Heart left ventricle (tissue), 16 donors: ENCODE measurements at regions of chr19 and their contacts with region 1.

Region 1: GRCh38 chr19:33302175-33302973 is at the start of gene CEBPA:
- DNase-seq: peak; percentile 74 to 92 (median 80)
- ATAC-seq: peak; percentile 52 to 94 (median 90)
- H3K4me3 ChIP-seq: peak within 1 kb of the TSS; percentile 49 to 93 (median 72)
- H3K27ac ChIP-seq: peak within 1 kb of the TSS in 9 of 12 donors; percentile 1 to 88 (median 57)
- H3K4me1 ChIP-seq: peaks cover 0 to 43% (median 15%) of the 10 kb centered on the region in 12 donors
- H3K27me3 ChIP-seq: peaks cover 0 to 44% (median 18%) of the 10 kb centered on the region in 9 donors
- CTCF ChIP-seq: peak in 8 of 12 donors; percentile 12 to 66 (median 54)
- POLR2A ChIP-seq: peak in 1 of 2 donors; percentile 91
- total RNA-seq, gene CEBPA: 0.69 to 40.1 (median 2.5) TPM

Region 2: DNA sequence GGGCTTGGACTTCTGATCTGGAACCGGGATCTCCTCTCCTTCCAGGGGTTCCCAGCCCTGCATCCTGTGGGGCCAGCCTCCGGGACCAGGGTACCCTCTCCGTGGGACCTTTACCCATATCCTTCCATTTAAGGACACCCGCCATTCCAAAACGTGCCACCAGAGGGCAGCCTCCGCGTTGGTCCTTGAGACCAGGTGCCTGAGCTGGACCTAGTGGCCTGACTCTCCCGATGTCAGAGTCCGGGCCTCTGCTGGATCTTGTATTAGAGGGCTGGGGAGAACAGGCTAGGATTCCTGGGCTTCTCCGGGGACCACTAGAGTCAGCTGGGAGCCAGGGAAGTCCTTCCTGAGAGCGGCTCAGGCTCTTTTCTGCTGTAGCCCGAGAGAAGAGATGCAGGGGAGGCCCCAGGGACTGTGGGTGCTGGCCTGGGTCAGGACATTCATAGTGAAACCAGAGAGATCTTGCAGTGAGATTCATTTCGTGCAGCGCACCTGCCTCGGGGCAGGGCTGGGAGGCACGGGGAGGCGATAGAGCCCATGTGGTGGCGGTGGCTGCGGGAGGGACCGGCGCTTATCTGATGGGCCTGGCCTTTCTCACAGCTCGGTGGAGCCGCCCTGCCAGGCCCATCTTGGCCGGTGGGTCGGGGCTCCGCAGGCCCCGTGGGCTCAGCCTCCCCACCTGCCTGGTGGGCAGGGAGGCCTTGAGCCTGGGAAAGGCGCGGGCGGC is 66.9 kb before region 1 on chr19:
- intact Hi-C with region 1: loop called in 1 of 10 experiments (anchors 5 kb)
- DNase-seq: peak; percentile 61 to 91 (median 77)
- ATAC-seq: peak in 3 of 4 donors; percentile 67 to 82 (median 71)
- H3K4me3 ChIP-seq: no peak overlapping the region
- H3K27ac ChIP-seq: no peak overlapping the region
- H3K4me1 ChIP-seq: peaks cover 0 to 3% (median 0%) of the 10 kb centered on the region in 12 donors
- H3K27me3 ChIP-seq: peaks cover 0 to 33% (median 6%) of the 10 kb centered on the region in 9 donors
- CTCF ChIP-seq: peak; percentile 82 to 94 (median 90)
- POLR2A ChIP-seq: no peak

Region 3: DNA sequence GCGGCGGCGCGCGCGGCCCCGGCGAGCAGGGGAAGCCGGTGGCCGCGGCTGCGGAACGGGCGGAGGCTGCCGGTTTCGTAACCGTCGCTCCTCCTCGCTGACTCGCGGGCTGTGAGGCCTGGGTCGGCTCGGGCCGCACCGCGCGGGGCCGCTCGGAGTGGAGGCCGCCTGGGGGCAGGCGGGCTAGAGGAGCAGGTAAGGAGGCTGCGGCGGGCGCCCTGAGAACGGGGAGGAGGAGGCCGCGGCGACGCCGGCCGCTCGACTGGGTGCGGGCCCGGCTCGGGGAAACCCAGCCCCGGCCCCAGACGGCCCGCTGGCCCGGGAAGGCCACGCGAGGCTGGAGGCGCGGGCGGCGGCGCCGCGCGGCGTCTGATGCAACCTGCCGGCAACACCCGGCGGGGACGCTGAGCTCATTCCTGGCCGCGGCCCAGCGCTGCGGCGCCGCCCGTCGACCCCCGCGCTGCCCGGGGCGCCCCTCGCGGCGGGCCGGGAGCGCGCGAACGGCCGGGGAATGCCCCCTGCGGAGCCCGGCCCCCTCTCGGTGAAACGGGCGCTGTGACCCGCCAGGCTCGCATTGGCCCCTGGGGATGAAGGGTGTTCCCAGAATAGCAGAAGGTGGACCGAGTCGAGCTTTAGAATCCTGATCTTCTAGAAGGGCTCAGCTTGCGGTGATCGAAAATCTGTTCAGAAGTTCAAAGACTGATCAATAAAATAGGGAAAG is 71.5 kb after region 1 on chr19 and contains the start of gene CEBPG:
- intact Hi-C with region 1: loop called in 4 of 10 experiments (anchors 5 to 10 kb)
- DNase-seq: peak; percentile 62 to 82 (median 63)
- ATAC-seq: peak in 3 of 4 donors; percentile 40 to 48 (median 44)
- H3K4me3 ChIP-seq: peak within 1 kb of the TSS; percentile 67 to 99 (median 87)
- H3K27ac ChIP-seq: peak within 1 kb of the TSS; percentile 91 to 100 (median 98)
- H3K4me1 ChIP-seq: peaks cover 4 to 59% (median 28%) of the 10 kb centered on the region in 12 donors
- H3K27me3 ChIP-seq: no peaks in the 10 kb centered on the region
- CTCF ChIP-seq: peak in 6 of 12 donors; percentile 18 to 47 (median 37)
- POLR2A ChIP-seq: peak; percentile 61 to 94
- total RNA-seq, gene CEBPG: 11.8 to 18.3 (median 14.7) TPM

Region 4: DNA sequence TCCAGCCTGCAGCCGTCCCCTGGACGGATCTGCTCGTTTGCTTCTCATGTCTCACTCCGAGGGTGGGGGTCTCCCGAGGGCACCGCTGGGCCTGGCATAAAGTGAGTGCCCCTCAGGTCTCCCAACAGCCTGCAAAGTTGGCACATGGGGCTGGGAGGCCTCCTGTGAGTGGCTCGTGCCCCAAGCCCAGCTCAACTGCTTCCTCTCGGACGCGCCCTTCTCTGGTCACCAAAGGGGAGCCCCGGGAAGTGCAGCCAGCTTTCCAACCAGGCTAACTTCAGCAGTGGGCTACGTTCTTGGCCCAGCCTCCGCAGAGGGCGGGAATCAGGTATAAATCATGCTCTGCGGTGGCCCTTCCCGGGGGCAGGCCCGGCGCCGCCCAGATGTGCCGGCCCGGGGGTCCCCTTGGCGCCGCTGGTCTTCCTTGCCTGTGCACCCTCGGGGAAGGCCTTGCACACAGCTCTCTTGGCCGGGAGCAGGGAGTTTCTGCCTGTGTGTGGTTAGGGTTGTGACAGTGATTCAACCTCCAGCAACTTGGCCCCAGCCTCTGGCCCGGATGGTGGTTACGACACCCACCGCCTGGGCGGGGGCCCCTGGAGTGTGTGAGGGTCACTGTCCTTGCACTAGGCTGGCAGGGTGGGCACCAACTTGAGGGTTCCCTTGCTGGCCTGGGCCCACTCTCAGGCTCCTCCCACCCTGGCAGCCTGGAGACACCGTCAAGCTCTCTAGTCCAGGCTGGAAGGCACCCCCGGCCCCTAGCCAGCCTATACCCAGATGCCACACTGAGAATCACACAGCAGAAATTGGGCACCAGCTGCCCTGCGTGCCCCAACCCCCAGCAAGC is 91.9 kb after region 1 on chr19:
- intact Hi-C with region 1: loop called in 1 of 10 experiments (anchors 10 kb)
- DNase-seq: peak in 3 of 5 donors; percentile 57 to 73 (median 70)
- ATAC-seq: peak in 2 of 4 donors; percentile 41
- H3K4me3 ChIP-seq: no peak overlapping the region
- H3K27ac ChIP-seq: peak overlapping the region in 8 of 12 donors; percentile 1 to 44 (median 15)
- H3K4me1 ChIP-seq: peaks cover 4 to 87% (median 69%) of the 10 kb centered on the region in 12 donors
- H3K27me3 ChIP-seq: no peaks in the 10 kb centered on the region
- CTCF ChIP-seq: no peak
- POLR2A ChIP-seq: no peak

Region 5: DNA sequence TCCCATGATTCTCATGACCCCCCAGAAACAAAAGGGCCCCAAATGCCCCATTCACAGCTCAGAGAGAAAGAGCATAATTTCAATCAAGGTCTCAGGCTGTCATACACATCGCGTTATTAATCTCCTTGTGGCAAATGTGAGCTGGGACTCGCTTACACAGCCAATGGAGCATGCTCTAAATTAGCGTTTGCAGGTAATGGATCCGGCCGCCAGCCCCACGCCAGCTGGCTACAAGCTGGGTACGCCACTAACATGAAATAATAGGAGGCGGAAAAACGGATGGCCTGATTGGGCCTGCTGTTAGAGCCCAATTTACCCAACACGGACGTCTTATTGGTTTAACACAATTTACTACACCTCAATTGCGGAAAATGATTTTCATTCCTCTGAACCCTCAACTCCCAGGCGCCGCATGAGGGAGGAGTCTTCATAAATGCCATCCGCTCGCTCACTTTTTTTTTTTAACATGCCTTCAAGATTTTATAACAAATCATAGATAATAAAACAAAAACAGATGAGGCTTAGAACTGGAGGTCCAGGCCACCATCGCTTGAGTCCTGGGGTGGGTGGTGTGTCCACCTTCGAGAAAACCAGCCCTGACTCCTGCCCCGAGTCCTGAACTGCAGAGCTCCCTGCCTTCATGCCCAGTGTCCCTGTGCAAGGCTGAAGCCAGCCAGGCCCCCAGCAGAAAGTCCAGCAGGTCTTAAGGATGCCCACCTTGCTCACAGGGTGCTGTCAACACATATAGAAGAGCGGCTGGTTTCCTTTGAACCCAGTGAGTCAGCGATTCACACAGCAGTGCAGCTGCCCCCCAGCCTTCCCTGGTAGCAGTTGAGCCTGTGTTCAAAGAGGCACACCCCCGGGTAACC is 157.1 kb after region 1 on chr19:
- intact Hi-C with region 1: no loop called
- DNase-seq: no peak
- ATAC-seq: no peak
- H3K4me3 ChIP-seq: no peak overlapping the region
- H3K27ac ChIP-seq: no peak overlapping the region
- H3K4me1 ChIP-seq: no peaks in the 10 kb centered on the region
- H3K27me3 ChIP-seq: no peaks in the 10 kb centered on the region
- CTCF ChIP-seq: no peak
- POLR2A ChIP-seq: no peak

Region 6: DNA sequence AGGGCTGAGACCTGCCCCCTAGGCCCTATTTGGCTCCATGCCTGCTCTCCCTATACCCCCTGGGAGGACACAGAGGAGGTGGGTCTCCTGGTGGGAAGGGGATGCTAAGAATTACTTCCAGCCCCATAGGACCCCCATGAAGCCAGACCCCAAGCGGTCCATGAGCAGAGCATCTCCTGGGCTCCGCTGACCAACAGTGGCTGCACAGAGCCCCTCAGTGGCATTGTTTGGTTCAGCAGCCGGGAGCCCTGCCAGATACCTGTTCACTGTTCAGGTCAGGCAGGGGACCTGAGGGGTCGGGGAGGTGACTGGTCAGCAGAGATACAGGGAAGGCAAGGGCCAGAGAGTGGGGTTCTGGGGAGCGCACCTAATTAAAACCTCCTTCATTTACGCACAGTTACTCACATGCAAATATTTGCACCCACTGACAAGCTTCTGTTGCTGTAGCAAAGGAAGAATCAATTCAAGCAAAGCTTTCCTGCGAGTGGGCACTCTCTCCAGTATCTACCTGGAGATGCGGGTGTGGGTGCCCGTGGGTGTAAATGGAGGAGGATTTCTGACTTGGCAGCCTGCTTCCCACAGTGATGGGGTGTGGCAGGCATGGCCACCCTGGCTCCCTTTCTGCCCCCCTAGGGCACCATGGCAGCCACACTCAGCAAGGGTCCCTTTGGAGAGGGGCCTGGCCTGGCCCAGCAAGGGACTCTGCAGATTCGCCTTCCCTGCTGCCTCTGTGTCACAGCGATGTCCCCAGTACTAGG is 402.9 kb after region 1 on chr19:
- intact Hi-C with region 1: no loop called
- DNase-seq: peak in 1 of 5 donors; percentile 30
- ATAC-seq: no peak
- H3K4me3 ChIP-seq: no peak overlapping the region
- H3K27ac ChIP-seq: no peak overlapping the region
- H3K4me1 ChIP-seq: no peaks in the 10 kb centered on the region
- H3K27me3 ChIP-seq: no peaks in the 10 kb centered on the region
- CTCF ChIP-seq: no peak
- POLR2A ChIP-seq: no peak